Activated CD4-positive, alpha-beta T cell treated with anti-CD3 and anti-CD28 coated beads for 36 hours (primary cell): ENCODE measurements at regions of chr6 and their contacts with region 1.

Region 1: GRCh38 chr6:37987018-37987417 is 167.5 kb downstream of the ZFAND3 start:
- DNase-seq: peak; percentile 55
- ATAC-seq: peak; percentile 74
- H3K4me3 Mint-ChIP-seq: peak overlapping the region; percentile 7
- H3K27ac Mint-ChIP-seq: peak overlapping the region; percentile 29
- H3K4me1 Mint-ChIP-seq: peaks cover 71% of the 10 kb centered on the region
- H3K27me3 Mint-ChIP-seq: no peaks in the 10 kb centered on the region

Region 2: DNA sequence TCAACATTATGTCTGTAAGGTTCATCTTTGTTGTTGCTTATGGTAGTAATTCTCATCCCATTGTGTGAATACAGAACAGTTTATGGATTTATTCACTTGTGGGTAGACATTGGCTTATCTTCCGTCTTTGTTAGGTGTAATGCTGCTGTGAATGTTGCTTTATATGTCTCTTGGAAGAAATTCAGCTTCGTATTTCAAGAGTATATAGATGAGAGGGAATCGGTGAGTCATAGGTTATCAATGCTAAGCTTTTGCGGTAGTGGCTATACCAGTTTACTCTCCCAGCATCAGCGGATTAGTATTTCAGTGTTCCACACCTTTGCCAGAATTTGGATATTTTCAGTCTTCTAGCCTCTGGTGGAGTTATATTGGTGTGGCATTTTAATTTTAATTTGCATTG is 89.7 kb before region 1 on chr6:
- CTCF ChIA-PET with region 1: no interaction called
- POLR2A ChIA-PET with region 1: no interaction called
- intact Hi-C with region 1: no loop called
- DNase-seq: no peak
- ATAC-seq: peak; percentile 36
- H3K4me3 Mint-ChIP-seq: no peak overlapping the region
- H3K27ac Mint-ChIP-seq: no peak overlapping the region
- H3K4me1 Mint-ChIP-seq: peaks cover 40% of the 10 kb centered on the region
- H3K27me3 Mint-ChIP-seq: no peaks in the 10 kb centered on the region

Region 3: GRCh38 chr6:37913210-37913609 is 73.8 kb before region 1 on chr6:
- CTCF ChIA-PET with region 1: no interaction called
- POLR2A ChIA-PET with region 1: no interaction called
- intact Hi-C with region 1: loop called in 1 of 2 experiments (anchors 1 kb)
- DNase-seq: no peak
- ATAC-seq: peak; percentile 81
- H3K4me3 Mint-ChIP-seq: no peak overlapping the region
- H3K27ac Mint-ChIP-seq: no peak overlapping the region
- H3K4me1 Mint-ChIP-seq: peaks cover 55% of the 10 kb centered on the region
- H3K27me3 Mint-ChIP-seq: no peaks in the 10 kb centered on the region

Region 4: DNA sequence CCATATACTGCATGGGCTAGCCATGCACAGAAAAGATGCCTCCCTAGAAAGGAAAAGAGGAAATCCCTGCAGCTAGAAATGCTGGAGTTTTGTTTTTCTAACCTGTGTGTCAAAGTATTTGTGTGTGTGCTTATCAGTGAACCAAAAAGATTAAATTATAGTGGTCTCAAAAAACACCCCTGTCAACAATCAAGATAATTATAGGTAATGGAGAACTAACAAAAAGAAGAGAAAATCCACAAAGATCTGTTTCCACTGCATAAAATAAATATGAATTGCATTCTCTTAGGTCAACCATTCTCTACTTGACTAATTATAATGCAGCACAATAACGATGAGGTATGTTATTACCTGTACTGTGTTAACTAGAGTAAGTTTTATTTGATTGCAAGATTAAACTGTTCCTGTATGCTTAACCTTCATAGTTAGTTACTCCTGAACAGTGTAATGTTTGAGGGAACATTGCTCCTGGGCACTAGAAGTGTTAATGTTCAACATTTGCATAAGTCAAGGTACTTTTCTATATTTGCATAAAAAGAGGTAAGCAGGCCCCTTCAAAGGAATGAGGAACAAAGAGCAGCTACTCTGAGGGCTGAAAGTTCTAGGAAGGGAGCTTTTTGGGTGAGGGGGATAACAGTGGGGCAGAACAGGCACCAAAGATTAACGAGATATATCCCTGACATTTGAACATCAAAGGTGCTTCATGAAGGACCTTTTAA is 440.6 kb after region 1 on chr6:
- CTCF ChIA-PET with region 1: no interaction called
- POLR2A ChIA-PET with region 1: no interaction called
- intact Hi-C with region 1: no loop called
- DNase-seq: no peak
- ATAC-seq: no peak
- H3K4me3 Mint-ChIP-seq: no peak overlapping the region
- H3K27ac Mint-ChIP-seq: no peak overlapping the region
- H3K4me1 Mint-ChIP-seq: peaks cover 3% of the 10 kb centered on the region
- H3K27me3 Mint-ChIP-seq: no peaks in the 10 kb centered on the region